H1 (cell line): ENCODE measurements at regions of chr1 and their contacts with region 1.

Region 1: DNA sequence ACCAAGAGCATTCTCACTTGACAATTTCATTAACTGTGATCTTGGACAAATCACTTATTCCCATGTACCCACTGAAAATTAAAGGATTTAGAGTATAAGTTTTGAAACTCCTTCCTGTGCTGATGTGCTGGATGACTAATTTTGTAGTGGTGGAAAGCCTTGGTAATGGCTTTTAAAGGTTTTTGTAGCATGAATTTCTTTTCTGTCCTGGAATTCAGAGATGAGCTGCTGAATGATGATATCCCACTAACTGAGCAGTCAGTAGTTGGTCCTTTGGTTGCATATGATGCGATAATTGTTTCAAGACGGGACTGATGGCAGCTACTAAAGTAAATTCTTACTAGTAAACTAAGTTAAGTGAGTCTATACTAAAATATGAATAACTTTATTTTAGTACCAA is 5.2 kb downstream of the RPL5 start:
- DNase-seq: no peak
- H3K4me3 ChIP-seq: no peak overlapping the region
- H3K27ac ChIP-seq: no peak overlapping the region
- H3K4me1 ChIP-seq: peaks cover 0 to 4% (median 3%) of the 10 kb centered on the region in 4 experiments; a peak in 4 of 7 replicates
- H3K27me3 ChIP-seq: no peaks in the 10 kb centered on the region; a peak in 1 of 7 replicates
- CTCF ChIP-seq: no peak
- EP300 ChIP-seq: no peak
- POLR2A ChIP-seq: no peak
- RAD21 ChIP-seq: no peak

Region 2: DNA sequence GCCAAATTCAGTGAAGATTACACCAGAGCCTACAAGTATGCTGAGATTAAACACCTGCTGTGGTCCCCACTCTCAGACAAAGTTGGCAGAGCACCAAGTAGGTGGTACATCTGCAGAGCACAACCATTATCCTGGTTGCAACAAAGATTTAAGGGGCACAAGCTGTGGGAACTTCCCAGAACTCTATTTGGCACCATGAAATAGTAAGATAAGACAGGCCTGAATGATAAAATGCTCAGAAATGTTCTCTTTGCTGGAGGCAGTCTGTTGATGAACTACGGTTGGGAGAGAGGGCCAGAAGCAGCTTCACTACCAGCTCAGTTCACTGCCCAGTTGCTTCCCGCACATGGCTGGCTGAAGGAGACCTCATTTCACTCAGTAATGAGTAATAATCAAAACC is 14.7 kb after region 1 on chr1:
- CTCF ChIA-PET with region 1: interaction called, 3 read pairs
- POLR2A ChIA-PET with region 1: interaction called, 13 read pairs
- DNase-seq: no peak
- H3K4me3 ChIP-seq: no peak overlapping the region
- H3K27ac ChIP-seq: no peak overlapping the region
- H3K4me1 ChIP-seq: no peaks in the 10 kb centered on the region
- H3K27me3 ChIP-seq: no peaks in the 10 kb centered on the region
- CTCF ChIP-seq: no peak
- EP300 ChIP-seq: no peak
- POLR2A ChIP-seq: no peak
- RAD21 ChIP-seq: no peak